CD8-positive, alpha-beta T cell (primary cell): ENCODE measurements at regions of chr12 and their contacts with region 1.

Region 1: DNA sequence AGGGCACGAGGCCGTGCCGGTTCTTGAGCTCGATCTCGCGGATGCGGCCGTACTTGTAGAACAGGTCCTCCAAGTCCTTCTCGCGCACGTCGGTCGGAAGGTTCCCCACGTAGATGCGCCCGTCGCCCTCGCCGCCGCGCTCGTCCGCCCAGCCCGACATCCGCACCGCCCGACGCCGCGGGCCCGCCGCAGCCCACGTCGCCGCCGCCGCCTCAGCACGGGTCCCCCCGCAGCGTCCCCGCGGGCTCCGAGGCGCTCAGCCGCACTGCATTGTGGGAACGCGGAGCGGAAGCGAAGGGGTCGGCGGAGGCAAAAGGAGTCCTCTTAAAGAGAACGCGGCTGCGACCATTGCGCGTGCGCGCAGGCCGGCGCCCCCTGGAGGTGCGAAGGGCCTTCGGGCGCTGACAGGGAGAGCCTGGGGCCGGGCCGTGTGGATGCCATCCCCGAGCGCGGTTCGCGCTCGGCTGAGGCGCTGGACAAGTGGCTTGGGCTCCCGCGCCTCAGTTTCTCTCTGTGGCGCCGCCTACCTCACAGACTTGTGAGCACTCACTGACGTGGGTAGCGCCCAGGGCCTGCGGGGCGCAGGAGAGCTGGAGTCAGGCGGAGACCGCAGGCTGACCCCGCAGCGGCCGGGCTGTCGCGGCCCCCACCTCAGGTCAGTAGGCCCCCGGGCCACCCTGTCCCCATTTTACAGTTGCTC is at the start of gene SRSF9:
- DNase-seq: peak; percentile 90 to 99 (median 97)
- ATAC-seq: peak; percentile 84
- H3K4me3 ChIP-seq: peak within 1 kb of the TSS; percentile 77 to 89
- H3K4me3 Mint-ChIP-seq: peak within 1 kb of the TSS; percentile 86
- H3K27ac ChIP-seq: peak within 1 kb of the TSS; percentile 70 to 82
- H3K27ac Mint-ChIP-seq: peak within 1 kb of the TSS; percentile 91
- H3K4me1 ChIP-seq: peaks cover 26% of the 10 kb centered on the region
- H3K4me1 Mint-ChIP-seq: peaks cover 40% of the 10 kb centered on the region
- H3K27me3 ChIP-seq: no peaks in the 10 kb centered on the region
- H3K27me3 Mint-ChIP-seq: no peaks in the 10 kb centered on the region
- CTCF ChIP-seq: peak; percentile 96
- total RNA-seq, gene SRSF9: 137 to 139 TPM

Region 2: DNA sequence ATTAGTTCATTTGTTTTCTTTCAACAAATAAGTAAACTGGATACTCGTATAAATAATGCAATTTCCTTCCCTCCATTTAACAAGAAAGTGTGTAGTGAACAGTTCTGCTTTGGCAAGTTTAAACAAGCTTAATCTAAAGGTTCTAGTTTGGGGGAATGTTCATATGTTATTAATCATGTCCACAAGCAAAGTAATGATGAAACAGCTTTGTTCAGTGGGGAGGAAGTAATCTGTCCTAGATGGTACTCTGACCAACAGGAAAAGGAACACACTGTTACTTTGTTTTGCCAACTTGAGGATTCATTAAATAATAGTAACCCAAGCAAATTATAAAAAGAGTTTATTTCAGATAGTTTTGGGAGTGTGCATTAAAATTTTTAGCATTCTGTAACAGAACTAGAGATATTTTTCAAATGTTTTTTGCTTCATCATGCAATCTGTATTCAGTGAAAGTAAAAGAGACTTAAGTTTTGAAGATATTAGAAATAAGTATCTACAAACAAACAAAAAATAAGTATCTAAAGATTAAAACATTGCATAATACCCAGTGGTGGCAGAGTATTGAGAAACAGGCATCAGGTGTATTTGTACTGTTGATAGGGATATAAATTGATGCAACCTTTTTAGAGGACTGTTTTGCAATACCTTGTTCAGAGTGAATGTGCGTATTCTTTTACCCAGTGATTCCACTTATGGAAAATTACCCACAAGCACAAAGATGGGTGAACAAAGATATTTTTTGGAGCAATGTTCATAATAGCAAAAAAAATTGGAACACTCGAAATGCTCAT is 414.2 kb before region 1 on chr12:
- CTCF ChIA-PET with region 1: no interaction called
- POLR2A ChIA-PET with region 1: no interaction called
- intact Hi-C with region 1: no loop called
- DNase-seq: no peak
- ATAC-seq: no peak
- H3K4me3 ChIP-seq: no peak overlapping the region
- H3K4me3 Mint-ChIP-seq: no peak overlapping the region
- H3K27ac ChIP-seq: no peak overlapping the region
- H3K27ac Mint-ChIP-seq: no peak overlapping the region
- H3K4me1 ChIP-seq: no peaks in the 10 kb centered on the region
- H3K4me1 Mint-ChIP-seq: peaks cover 17% of the 10 kb centered on the region
- H3K27me3 ChIP-seq: no peaks in the 10 kb centered on the region
- H3K27me3 Mint-ChIP-seq: no peaks in the 10 kb centered on the region
- CTCF ChIP-seq: no peak

Region 3: GRCh38 chr12:120356567-120357030 is 113.0 kb before region 1 on chr12:
- CTCF ChIA-PET with region 1: interaction called, 6 read pairs
- POLR2A ChIA-PET with region 1: no interaction called
- intact Hi-C with region 1: loop called (anchors 1 kb)
- DNase-seq: peak; percentile 39 to 83 (median 75)
- ATAC-seq: peak; percentile 96
- H3K4me3 ChIP-seq: no peak overlapping the region
- H3K4me3 Mint-ChIP-seq: no peak overlapping the region
- H3K27ac ChIP-seq: no peak overlapping the region
- H3K27ac Mint-ChIP-seq: no peak overlapping the region
- H3K4me1 ChIP-seq: no peaks in the 10 kb centered on the region
- H3K4me1 Mint-ChIP-seq: peaks cover 2% of the 10 kb centered on the region
- H3K27me3 ChIP-seq: peaks cover 0 to 2% of the 10 kb centered on the region in 2 experiments
- H3K27me3 Mint-ChIP-seq: peaks cover 32% of the 10 kb centered on the region
- CTCF ChIP-seq: peak; percentile 89

Region 4: GRCh38 chr12:120445911-120446843 is 23.4 kb before region 1 on chr12 and contains the starts of genes GATC and TRIAP1:
- CTCF ChIA-PET with region 1: interaction called, 30 read pairs
- POLR2A ChIA-PET with region 1: interaction called, 4 read pairs
- intact Hi-C with region 1: loop called (anchors 1 to 2 kb)
- DNase-seq: peak; percentile 69 to 92 (median 87)
- ATAC-seq: peak; percentile 96
- H3K4me3 ChIP-seq: peak within 1 kb of the TSS; percentile 83 to 98
- H3K4me3 Mint-ChIP-seq: peak within 1 kb of the TSS; percentile 97
- H3K27ac ChIP-seq: peak within 1 kb of the TSS; percentile 89 to 93
- H3K27ac Mint-ChIP-seq: peak within 1 kb of the TSS; percentile 98
- H3K4me1 ChIP-seq: peaks cover 21% of the 10 kb centered on the region
- H3K4me1 Mint-ChIP-seq: peaks cover 32% of the 10 kb centered on the region
- H3K27me3 ChIP-seq: no peaks in the 10 kb centered on the region
- H3K27me3 Mint-ChIP-seq: no peaks in the 10 kb centered on the region
- CTCF ChIP-seq: no peak
- total RNA-seq, gene GATC: 16.6 to 17.3 TPM
- total RNA-seq, gene TRIAP1: 35.8 to 36.0 TPM

Region 5: DNA sequence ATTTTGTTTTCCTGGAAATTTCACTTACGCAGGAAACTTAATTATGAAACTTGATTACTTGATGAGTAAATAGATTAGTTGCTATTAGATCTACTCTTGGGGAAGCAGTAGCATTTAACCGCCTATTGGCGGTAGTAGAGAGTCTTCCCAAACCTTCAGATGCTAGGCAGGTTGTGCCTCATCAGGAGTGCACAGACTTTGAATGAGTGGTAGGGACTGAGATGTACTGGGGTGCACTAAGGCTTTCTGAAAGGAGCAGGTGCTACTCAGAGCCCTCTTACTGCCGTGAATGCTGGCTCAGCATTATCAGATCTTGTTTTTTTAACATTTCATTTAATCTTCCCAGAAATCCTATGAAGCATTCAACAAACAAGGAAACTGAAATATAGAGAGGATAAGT is 15.6 kb before region 1 on chr12:
- CTCF ChIA-PET with region 1: interaction called, 30 read pairs
- POLR2A ChIA-PET with region 1: interaction called, 6 read pairs
- intact Hi-C with region 1: no loop called
- DNase-seq: peak in 3 of 9 experiments; percentile 30 to 64 (median 49)
- ATAC-seq: peak; percentile 96
- H3K4me3 ChIP-seq: no peak overlapping the region
- H3K4me3 Mint-ChIP-seq: no peak overlapping the region
- H3K27ac ChIP-seq: no peak overlapping the region
- H3K27ac Mint-ChIP-seq: peak overlapping the region; percentile 30
- H3K4me1 ChIP-seq: no peaks in the 10 kb centered on the region
- H3K4me1 Mint-ChIP-seq: peaks cover 8% of the 10 kb centered on the region
- H3K27me3 ChIP-seq: no peaks in the 10 kb centered on the region
- H3K27me3 Mint-ChIP-seq: no peaks in the 10 kb centered on the region
- CTCF ChIP-seq: peak; percentile 78

Region 6: DNA sequence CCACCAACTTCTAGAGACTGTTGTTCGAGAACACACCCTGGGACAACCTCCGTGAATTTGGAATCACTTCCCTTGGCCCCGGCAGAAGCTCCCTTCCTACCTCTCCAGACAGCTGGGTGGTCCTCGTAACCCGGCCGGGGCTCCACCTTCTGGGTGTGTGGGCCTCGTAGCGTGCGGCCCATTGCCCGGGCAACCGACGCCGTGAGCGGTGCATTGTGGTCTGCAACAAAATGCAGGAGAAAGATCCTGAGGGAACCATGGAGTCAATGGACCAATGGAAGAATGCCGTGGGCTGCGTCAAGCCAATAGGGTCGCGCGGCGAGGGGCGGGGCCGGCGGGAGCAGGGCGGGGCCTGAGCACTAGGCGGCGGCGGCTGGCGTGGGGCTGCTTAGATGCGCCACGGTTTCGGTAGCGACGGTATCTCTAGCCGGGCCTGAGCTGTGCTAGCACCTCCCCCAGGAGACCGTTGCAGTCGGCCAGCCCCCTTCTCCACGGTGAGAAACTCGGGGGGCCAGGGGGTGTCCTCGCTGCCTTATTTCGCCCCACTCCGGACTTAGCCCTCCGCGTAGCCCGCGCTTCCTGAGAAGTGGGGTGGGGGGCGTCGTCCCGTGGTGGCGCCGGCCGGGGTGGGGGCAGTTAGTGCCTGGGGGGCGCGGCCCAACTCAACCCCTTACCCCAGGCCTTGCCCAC is 26.3 kb after region 1 on chr12 and contains the start of gene DYNLL1:
- CTCF ChIA-PET with region 1: interaction called, 8 read pairs
- POLR2A ChIA-PET with region 1: interaction called, 7 read pairs
- intact Hi-C with region 1: loop called (anchors 1 kb)
- DNase-seq: peak; percentile 95 to 98 (median 97)
- ATAC-seq: peak; percentile 97
- H3K4me3 ChIP-seq: peak within 1 kb of the TSS; percentile 80 to 96
- H3K4me3 Mint-ChIP-seq: peak within 1 kb of the TSS; percentile 94
- H3K27ac ChIP-seq: peak within 1 kb of the TSS; percentile 79 to 84
- H3K27ac Mint-ChIP-seq: peak within 1 kb of the TSS; percentile 90
- H3K4me1 ChIP-seq: peaks cover 17% of the 10 kb centered on the region
- H3K4me1 Mint-ChIP-seq: peaks cover 32% of the 10 kb centered on the region
- H3K27me3 ChIP-seq: no peaks in the 10 kb centered on the region
- H3K27me3 Mint-ChIP-seq: no peaks in the 10 kb centered on the region
- CTCF ChIP-seq: no peak
- total RNA-seq, gene DYNLL1: 25.9 to 26.1 TPM

Region 7: GRCh38 chr12:120528861-120529525 is 59.4 kb after region 1 on chr12 and contains the start of gene COQ5:
- CTCF ChIA-PET with region 1: no interaction called
- POLR2A ChIA-PET with region 1: interaction called, 4 read pairs
- intact Hi-C with region 1: loop called (anchors 1 to 2 kb)
- DNase-seq: peak; percentile 70 to 90 (median 85)
- ATAC-seq: peak; percentile 96
- H3K4me3 ChIP-seq: peak within 1 kb of the TSS; percentile 63 to 75
- H3K4me3 Mint-ChIP-seq: peak within 1 kb of the TSS; percentile 100
- H3K27ac ChIP-seq: peak within 1 kb of the TSS; percentile 81 to 82
- H3K27ac Mint-ChIP-seq: peak within 1 kb of the TSS; percentile 99
- H3K4me1 ChIP-seq: peaks cover 5% of the 10 kb centered on the region
- H3K4me1 Mint-ChIP-seq: peaks cover 30% of the 10 kb centered on the region
- H3K27me3 ChIP-seq: no peaks in the 10 kb centered on the region
- H3K27me3 Mint-ChIP-seq: no peaks in the 10 kb centered on the region
- CTCF ChIP-seq: no peak
- total RNA-seq, gene COQ5: 7.7 to 9.0 TPM

Region 8: GRCh38 chr12:120534203-120534702 is 64.7 kb after region 1 on chr12 and contains the start of gene RNF10:
- CTCF ChIA-PET with region 1: no interaction called
- POLR2A ChIA-PET with region 1: interaction called, 4 read pairs
- intact Hi-C with region 1: loop called (anchors 1 to 2 kb)
- DNase-seq: peak; percentile 48 to 92 (median 73)
- ATAC-seq: peak; percentile 69
- H3K4me3 ChIP-seq: peak within 1 kb of the TSS; percentile 89 to 95
- H3K4me3 Mint-ChIP-seq: peak within 1 kb of the TSS; percentile 96
- H3K27ac ChIP-seq: peak within 1 kb of the TSS; percentile 76 to 83
- H3K27ac Mint-ChIP-seq: peak within 1 kb of the TSS; percentile 95
- H3K4me1 ChIP-seq: peaks cover 38% of the 10 kb centered on the region
- H3K4me1 Mint-ChIP-seq: peaks cover 57% of the 10 kb centered on the region
- H3K27me3 ChIP-seq: no peaks in the 10 kb centered on the region
- H3K27me3 Mint-ChIP-seq: no peaks in the 10 kb centered on the region
- CTCF ChIP-seq: no peak
- total RNA-seq, gene RNF10: 402 to 410 TPM